Activated T-helper 1 cell treated with anti-CD3 and anti-CD28 coated beads, Interleukin-12 subunit alpha, Interleukin-12 subunit beta, Interleukin-2, Interleukin-4 antibody, amounts not matched to agents 30 ng/mL and 10 ng/mL and 1 ng/mL, durations not matched to agents 14 hours and 24 hours and 36 hours (primary cell): ENCODE measurements at regions of chr12 and their contacts with region 1.

Region 1: DNA sequence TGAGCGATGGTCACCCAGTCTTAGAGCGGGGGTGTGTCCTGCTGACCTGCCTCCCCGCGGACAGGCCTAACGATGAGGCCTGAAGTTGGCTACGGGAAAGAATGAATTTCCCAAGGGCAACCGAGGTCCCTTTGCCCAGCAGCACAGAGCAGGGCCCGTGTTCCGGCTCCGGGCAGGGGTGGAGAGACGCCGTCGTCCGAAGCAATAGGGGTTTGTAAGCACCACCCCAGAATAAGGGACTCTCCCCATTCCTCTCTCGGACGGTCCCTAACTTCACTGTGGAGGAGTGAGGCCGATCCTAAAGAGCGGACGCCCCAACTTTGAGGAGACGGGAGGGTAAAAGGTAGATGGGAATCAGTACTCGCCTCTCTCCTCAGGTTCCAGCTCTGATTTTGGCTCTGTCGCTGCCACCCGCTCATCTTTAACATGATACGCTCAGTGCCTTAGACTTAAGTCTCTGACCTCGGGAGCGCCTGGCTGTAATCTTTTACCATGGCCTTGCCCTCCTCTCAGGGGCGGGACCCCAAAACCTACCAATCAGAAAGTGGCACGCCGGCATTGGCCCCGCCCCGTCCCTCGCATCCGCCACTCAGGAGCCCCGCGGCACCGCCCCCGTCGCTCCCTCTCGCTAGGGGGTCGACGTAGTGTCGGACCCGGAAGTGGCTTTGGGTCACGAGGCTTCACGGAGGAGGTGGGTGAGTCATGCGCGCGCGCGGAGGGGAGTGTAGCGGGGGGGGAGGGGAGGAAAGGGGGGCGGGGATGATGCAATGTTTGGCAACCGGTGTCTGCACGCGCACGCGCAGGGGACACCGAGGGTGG is at the start of gene DDIT3:
- DNase-seq: peak; percentile 99
- H3K4me3 Mint-ChIP-seq: peak within 1 kb of the TSS; percentile 97
- H3K27ac Mint-ChIP-seq: peak within 1 kb of the TSS; percentile 100
- H3K4me1 Mint-ChIP-seq: peaks cover 62% of the 10 kb centered on the region
- H3K27me3 Mint-ChIP-seq: no peaks in the 10 kb centered on the region
- total RNA-seq, gene DDIT3: 17.8 and 18.1 TPM in 2 replicates

Region 2: DNA sequence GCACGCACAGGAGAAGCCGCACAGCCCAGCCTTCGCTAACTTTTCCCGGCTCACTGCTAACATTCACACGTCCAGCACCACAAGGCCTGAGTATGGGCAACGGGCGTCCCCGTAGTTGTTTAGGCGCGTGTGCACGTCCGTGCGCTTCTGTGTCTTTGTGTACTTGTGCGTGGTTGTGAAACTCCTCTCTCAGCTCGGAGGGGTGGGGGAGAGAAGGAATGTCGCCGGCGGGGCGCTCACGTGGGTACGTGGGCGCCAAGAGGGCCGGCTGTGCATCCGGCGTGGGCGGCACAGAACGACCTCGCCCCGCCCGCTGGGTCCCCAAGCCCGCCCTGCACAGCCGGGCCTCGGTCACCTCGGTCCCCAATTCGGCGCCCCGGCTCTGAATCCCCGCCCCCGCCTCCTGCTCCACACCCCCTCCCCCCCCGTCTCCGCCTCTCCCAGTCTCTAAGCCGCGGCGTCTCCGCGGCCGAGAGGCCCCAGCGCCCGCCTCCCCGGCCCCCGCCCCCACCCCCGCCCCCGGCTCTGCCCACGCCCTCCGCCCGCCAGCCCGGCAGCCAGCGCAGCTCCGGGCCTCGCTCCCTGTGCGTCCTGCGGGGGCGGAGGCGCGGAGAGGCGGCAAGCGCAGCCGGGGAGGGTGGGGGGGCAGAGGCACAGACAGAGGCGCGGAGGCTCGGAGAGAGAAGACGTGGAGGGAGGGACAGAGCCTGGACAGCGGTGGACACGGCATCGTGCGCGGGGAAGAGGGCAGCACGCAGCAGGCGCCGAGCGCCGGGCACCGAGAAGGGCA is 431.6 kb before region 1 on chr12 and contains the start of gene NAB2:
- intact Hi-C with region 1: loop called (anchors 1 kb)
- DNase-seq: peak; percentile 88
- H3K4me3 Mint-ChIP-seq: peak within 1 kb of the TSS; percentile 97
- H3K27ac Mint-ChIP-seq: peak within 1 kb of the TSS; percentile 98
- H3K4me1 Mint-ChIP-seq: peaks cover 77% of the 10 kb centered on the region
- H3K27me3 Mint-ChIP-seq: no peaks in the 10 kb centered on the region
- total RNA-seq, gene NAB2: 73.6 and 80.3 TPM in 2 replicates

Region 3: DNA sequence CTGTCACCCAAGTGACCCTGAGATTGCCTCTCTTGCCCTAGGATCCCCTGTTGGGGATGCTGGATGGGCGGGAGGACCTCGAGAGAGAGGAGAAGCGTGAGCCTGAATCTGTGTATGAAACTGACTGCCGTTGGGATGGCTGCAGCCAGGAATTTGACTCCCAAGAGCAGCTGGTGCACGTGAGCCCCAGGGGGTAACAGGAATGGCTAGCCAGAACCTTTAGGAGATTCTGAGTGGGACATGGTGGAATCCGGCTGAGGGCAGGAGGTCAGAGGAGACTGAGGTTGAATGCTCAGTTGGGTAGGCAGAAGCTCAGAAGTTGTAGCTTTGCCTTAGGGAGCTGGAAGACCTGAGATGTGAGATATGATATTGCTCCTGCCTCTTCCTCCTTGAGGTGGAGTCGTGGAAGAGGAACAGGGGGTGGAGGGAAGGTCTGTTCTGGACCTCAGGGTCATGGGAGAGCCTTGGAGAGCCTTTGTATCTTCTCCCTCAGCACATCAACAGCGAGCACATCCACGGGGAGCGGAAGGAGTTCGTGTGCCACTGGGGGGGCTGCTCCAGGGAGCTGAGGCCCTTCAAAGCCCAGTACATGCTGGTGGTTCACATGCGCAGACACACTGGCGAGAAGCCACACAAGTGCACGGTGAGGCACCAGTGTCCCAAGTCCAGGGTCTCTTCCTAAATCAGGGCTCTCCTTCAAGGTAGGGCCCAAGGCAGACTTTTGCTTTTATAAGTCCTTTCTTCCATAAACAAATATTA is 54.3 kb before region 1 on chr12:
- intact Hi-C with region 1: no loop called
- DNase-seq: no peak
- H3K4me3 Mint-ChIP-seq: no peak overlapping the region
- H3K27ac Mint-ChIP-seq: no peak overlapping the region
- H3K4me1 Mint-ChIP-seq: peaks cover 38% of the 10 kb centered on the region
- H3K27me3 Mint-ChIP-seq: peaks cover 12% of the 10 kb centered on the region

Region 4: DNA sequence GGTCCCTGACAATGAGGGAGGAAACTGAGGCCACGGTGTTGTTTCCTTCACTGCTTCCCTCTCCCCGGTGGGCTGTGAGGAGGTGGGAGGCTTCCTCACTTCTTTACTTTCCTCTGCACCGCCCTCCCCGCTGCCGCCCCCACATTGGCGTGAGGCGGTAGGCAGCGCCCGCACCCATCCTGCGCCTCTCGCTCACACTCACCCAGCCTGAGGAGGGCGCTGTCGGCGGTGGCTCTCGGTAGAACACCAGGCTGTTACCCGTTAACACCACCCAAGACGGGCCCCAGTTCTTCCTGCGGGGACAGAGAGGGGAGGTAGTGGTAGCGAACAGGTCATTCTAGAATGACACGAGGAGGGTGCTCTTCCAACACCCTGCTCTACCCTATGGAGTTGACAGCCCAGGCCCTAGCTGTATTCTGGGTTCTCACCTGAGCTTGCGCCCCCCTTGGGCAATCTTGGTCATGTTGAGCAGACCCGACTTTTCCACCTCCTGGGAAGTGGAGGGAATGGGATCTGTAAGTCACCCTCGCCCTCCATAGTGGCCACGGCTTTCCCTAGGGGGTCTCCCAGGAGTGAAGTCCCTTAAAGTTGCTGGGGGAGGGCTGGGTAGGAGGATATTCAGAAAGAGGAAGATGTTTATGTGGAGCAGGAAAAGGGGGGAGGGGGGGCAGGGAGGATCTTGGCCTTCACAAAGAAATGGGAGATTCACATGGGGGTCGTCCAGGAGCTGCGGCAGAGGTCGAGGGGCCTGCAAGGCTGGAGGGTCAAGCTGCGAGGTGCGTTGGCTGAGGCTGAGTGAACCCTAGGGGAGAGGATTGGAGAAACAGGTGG is 43.9 kb before region 1 on chr12:
- intact Hi-C with region 1: loop called (anchors 1 kb)
- DNase-seq: peak; percentile 67
- H3K4me3 Mint-ChIP-seq: peak overlapping the region; percentile 93
- H3K27ac Mint-ChIP-seq: peak overlapping the region; percentile 97
- H3K4me1 Mint-ChIP-seq: peaks cover 54% of the 10 kb centered on the region
- H3K27me3 Mint-ChIP-seq: no peaks in the 10 kb centered on the region

Region 5: GRCh38 chr12:57590536-57591479 is 70.5 kb after region 1 on chr12 and contains the start of gene PIP4K2C:
- intact Hi-C with region 1: loop called (anchors 2 kb)
- DNase-seq: peak; percentile 77
- H3K4me3 Mint-ChIP-seq: peak within 1 kb of the TSS; percentile 90
- H3K27ac Mint-ChIP-seq: peak within 1 kb of the TSS; percentile 75
- H3K4me1 Mint-ChIP-seq: peaks cover 31% of the 10 kb centered on the region
- H3K27me3 Mint-ChIP-seq: no peaks in the 10 kb centered on the region
- total RNA-seq, gene PIP4K2C: 22.8 and 25.7 TPM in 2 replicates

Region 6: DNA sequence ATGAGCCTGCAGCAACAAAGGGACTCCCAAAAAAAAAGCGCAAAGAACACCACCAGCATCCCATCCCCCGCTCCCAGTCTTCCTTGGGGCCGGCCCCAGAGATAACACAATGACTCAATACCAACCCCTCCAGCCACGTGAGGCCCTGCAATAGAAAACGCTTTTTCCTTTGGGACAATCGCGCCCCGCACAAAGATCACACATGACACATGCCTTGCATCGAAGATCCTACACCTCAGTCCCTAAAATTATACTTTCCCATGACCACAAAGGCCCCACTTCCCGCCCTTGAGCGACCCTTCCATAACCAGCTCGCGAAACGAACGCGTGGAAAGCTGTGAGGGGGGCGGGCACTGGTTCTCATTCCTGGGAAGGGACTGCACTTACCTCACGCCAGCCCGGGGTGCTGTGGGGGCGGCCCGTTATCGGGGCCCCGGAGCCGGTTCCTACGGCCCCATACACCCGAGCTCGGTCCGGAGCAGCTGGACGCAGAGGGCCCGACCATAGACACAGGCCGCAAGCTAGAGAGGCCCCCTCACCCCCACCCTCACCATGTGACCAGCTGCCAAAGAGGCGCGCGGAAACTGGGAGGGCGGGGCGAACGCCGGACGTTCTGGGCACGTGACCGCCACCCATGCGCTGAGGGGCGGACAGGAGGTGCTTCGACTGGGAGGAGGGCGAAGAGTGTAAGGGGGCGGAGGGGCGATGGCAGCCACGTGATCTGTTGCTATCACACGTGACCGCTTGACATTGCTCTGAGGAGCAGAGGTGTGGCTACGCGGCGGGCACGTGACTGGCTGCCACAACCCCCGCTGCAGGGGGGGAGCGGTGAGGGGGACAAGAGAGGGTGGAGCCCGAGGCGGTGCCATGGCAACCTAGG is 231.8 kb after region 1 on chr12 and contains the start of gene CDK4:
- intact Hi-C with region 1: loop called (anchors 1 kb)
- DNase-seq: peak; percentile 98
- H3K4me3 Mint-ChIP-seq: peak within 1 kb of the TSS; percentile 94
- H3K27ac Mint-ChIP-seq: peak within 1 kb of the TSS; percentile 95
- H3K4me1 Mint-ChIP-seq: peaks cover 67% of the 10 kb centered on the region
- H3K27me3 Mint-ChIP-seq: peaks cover 3% of the 10 kb centered on the region
- total RNA-seq, gene CDK4: 218 and 227 TPM in 2 replicates